Activated B cell treated with CpG ODN at 0.5 μM for 24 hours (primary cell): ENCODE measurements at regions of chr10 and their contacts with region 1.

Region 1: DNA sequence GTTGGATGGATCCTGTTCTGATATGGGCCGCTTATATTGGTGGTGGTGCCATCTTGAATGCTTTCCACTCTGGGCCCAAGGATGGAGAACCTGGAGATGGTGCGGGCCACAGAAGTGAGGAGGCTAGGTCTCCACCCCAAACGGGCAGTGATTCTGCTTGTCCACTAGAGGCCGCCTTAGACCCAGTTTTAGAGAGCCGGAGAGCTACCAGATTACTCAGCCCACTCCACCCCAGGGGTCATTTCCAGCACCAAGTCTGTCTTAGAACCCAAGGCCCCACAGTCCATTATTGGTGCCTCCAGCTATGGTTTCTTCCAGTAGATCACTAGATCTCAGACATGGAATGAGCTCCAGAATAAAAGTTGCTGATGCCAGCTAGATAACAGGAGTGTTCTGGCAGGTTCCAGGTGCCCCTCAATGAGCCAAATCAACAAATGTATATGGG is 11.8 kb upstream of the CAMK2G start:
- DNase-seq: peak; percentile 52
- ATAC-seq: peak; percentile 97
- H3K4me3 Mint-ChIP-seq: no peak overlapping the region
- H3K27ac Mint-ChIP-seq: no peak overlapping the region
- H3K4me1 Mint-ChIP-seq: peaks cover 11% of the 10 kb centered on the region
- H3K27me3 Mint-ChIP-seq: no peaks in the 10 kb centered on the region
- CTCF ChIP-seq: no peak

Region 2: DNA sequence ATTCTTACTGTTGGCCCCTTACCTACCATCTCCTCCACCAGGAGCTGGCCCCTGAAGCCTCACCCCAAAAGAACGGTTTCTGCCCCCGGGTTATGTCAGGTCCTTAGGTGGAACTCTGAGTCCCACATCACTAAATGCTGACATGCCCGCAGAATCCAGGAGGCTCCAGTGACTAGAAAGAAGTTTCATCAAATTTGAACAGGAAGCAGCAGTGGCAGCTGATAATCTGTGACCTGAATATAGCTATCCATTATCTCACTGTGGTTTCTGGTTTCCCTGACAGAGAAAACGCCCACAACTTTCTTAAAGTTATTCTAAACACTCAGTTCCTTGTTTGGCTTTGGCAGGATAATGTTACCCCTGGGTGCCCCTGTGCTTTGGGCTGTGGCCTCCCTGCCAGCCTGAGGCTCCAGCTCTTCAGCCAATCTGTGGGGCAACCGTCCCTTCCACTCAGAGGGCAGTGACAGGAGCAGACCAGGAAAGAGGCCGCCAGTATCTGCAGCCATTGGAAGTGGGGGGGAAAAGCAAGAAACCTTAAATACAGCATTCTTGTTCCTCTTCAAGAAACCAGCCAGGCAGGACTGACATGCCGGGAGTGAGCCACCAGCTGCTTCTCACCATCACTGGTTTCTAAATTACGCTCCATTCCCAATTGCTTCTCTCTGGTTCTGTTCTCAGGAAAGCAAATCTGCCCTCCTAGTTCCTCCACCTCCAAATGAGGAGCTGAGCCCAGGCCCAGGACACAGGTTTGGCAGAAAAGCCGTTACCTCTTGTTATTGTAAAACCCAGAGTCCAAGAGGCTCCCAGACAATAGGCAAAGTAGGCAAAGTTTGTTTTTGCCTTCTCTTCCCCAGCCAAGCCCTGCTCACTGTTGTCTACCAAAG is 70.6 kb after region 1 on chr10:
- CTCF ChIA-PET with region 1: interaction called, 13 read pairs
- POLR2A ChIA-PET with region 1: interaction called, 4 read pairs
- intact Hi-C with region 1: loop called (anchors 1 kb)
- DNase-seq: peak; percentile 36
- ATAC-seq: peak; percentile 58
- H3K4me3 Mint-ChIP-seq: peak overlapping the region; percentile 67
- H3K27ac Mint-ChIP-seq: peak overlapping the region; percentile 95
- H3K4me1 Mint-ChIP-seq: peaks cover 55% of the 10 kb centered on the region
- H3K27me3 Mint-ChIP-seq: no peaks in the 10 kb centered on the region
- CTCF ChIP-seq: no peak

Region 3: GRCh38 chr10:74096777-74097176 is 210.7 kb after region 1 on chr10:
- CTCF ChIA-PET with region 1: interaction called, 18 read pairs
- POLR2A ChIA-PET with region 1: no interaction called
- intact Hi-C with region 1: no loop called
- DNase-seq: no peak
- ATAC-seq: peak; percentile 98
- H3K4me3 Mint-ChIP-seq: peak overlapping the region; percentile 28
- H3K27ac Mint-ChIP-seq: peak overlapping the region; percentile 78
- H3K4me1 Mint-ChIP-seq: peaks cover 22% of the 10 kb centered on the region
- H3K27me3 Mint-ChIP-seq: no peaks in the 10 kb centered on the region
- CTCF ChIP-seq: no peak

Region 4: GRCh38 chr10:74176380-74177139 is 290.5 kb after region 1 on chr10:
- CTCF ChIA-PET with region 1: no interaction called
- POLR2A ChIA-PET with region 1: no interaction called
- intact Hi-C with region 1: no loop called
- DNase-seq: peak; percentile 92
- ATAC-seq: peak; percentile 90
- H3K4me3 Mint-ChIP-seq: peak overlapping the region; percentile 92
- H3K27ac Mint-ChIP-seq: peak overlapping the region; percentile 97
- H3K4me1 Mint-ChIP-seq: peaks cover 55% of the 10 kb centered on the region
- H3K27me3 Mint-ChIP-seq: no peaks in the 10 kb centered on the region
- CTCF ChIP-seq: no peak

Region 5: DNA sequence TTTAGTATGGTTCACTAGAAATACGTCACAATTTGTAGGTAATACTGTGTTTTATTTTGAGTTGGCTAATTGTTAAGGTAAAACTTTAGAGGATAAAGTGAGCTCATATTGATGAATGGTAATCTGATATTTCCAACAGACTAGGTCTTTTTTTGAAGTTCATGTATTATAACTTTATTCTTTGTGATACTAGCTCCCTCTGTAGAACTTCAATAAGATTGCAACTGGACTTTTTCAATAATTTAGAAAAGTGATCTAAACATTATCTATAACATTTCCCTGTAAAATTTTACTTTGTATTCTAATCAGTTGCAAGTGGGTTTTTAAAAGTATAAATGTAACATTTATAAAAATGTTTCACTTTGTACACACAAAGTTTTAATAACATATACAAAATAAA is 348.5 kb after region 1 on chr10:
- CTCF ChIA-PET with region 1: interaction called, 8 read pairs
- POLR2A ChIA-PET with region 1: interaction called, 6 read pairs
- intact Hi-C with region 1: loop called (anchors 1 kb)
- DNase-seq: no peak
- ATAC-seq: no peak
- H3K4me3 Mint-ChIP-seq: no peak overlapping the region
- H3K27ac Mint-ChIP-seq: no peak overlapping the region
- H3K4me1 Mint-ChIP-seq: peaks cover 16% of the 10 kb centered on the region
- H3K27me3 Mint-ChIP-seq: no peaks in the 10 kb centered on the region
- CTCF ChIP-seq: no peak